ENCODE measurements at regions of chr22 and their contacts with region 1.

Region 1: GRCh38 chr22:49767355-49768062 is 60.2 kb downstream of the BRD1 start:
- DNase-seq: peak; percentile 33
- ATAC-seq: peak; percentile 74
- H3K4me3 Mint-ChIP-seq: no peak overlapping the region
- H3K27ac Mint-ChIP-seq: no peak overlapping the region
- H3K4me1 Mint-ChIP-seq: peaks cover 5% of the 10 kb centered on the region
- H3K27me3 Mint-ChIP-seq: no peaks in the 10 kb centered on the region
- CTCF ChIP-seq: peak; percentile 92

Region 2: GRCh38 chr22:49735411-49735900 is 32.1 kb before region 1 on chr22:
- CTCF ChIA-PET with region 1: no interaction called
- POLR2A ChIA-PET with region 1: no interaction called
- intact Hi-C with region 1: no loop called
- DNase-seq: peak; percentile 12
- ATAC-seq: no peak
- H3K4me3 Mint-ChIP-seq: no peak overlapping the region
- H3K27ac Mint-ChIP-seq: no peak overlapping the region
- H3K4me1 Mint-ChIP-seq: peaks cover 14% of the 10 kb centered on the region
- H3K27me3 Mint-ChIP-seq: peaks cover 21% of the 10 kb centered on the region
- CTCF ChIP-seq: no peak

Region 3: GRCh38 chr22:49789289-49790141 is 22.0 kb after region 1 on chr22:
- CTCF ChIA-PET with region 1: interaction called, 11 read pairs
- POLR2A ChIA-PET with region 1: no interaction called
- intact Hi-C with region 1: no loop called
- DNase-seq: peak; percentile 73
- ATAC-seq: peak; percentile 94
- H3K4me3 Mint-ChIP-seq: peak overlapping the region; percentile 41
- H3K27ac Mint-ChIP-seq: peak overlapping the region; percentile 83
- H3K4me1 Mint-ChIP-seq: peaks cover 45% of the 10 kb centered on the region
- H3K27me3 Mint-ChIP-seq: no peaks in the 10 kb centered on the region
- CTCF ChIP-seq: no peak

Region 4: GRCh38 chr22:49799431-49800075 is 32.0 kb after region 1 on chr22:
- CTCF ChIA-PET with region 1: no interaction called
- POLR2A ChIA-PET with region 1: no interaction called
- intact Hi-C with region 1: no loop called
- DNase-seq: no peak
- ATAC-seq: no peak
- H3K4me3 Mint-ChIP-seq: no peak overlapping the region
- H3K27ac Mint-ChIP-seq: no peak overlapping the region
- H3K4me1 Mint-ChIP-seq: peaks cover 22% of the 10 kb centered on the region
- H3K27me3 Mint-ChIP-seq: no peaks in the 10 kb centered on the region
- CTCF ChIP-seq: no peak

Region 5: DNA sequence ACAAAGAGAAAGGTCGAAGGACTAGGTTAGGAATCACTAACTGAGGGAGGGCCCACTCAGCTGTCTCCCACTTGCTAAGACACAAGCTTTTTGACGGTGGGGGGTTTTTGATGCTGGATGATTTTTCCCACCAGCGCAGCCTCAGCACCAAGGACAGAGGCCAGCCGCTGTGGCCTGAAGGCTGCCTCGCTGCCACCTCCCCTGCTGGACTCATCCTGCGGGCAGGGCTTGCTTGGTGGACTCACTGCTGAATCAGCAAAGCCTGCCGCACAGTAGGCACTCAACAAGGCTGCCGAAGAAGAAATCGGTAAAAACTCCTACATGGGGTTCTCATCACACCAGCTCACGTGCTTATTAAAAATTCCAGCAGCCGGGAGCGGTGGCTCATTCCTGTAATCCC is 148.1 kb after region 1 on chr22:
- CTCF ChIA-PET with region 1: interaction called, 16 read pairs
- POLR2A ChIA-PET with region 1: interaction called, 4 read pairs
- intact Hi-C with region 1: loop called (anchors 10 kb)
- DNase-seq: no peak
- ATAC-seq: no peak
- H3K4me3 Mint-ChIP-seq: no peak overlapping the region
- H3K27ac Mint-ChIP-seq: no peak overlapping the region
- H3K4me1 Mint-ChIP-seq: peaks cover 16% of the 10 kb centered on the region
- H3K27me3 Mint-ChIP-seq: no peaks in the 10 kb centered on the region
- CTCF ChIP-seq: no peak

Region 6: GRCh38 chr22:49925525-49926128 is 158.1 kb after region 1 on chr22:
- CTCF ChIA-PET with region 1: interaction called, 13 read pairs
- POLR2A ChIA-PET with region 1: no interaction called
- intact Hi-C with region 1: loop called (anchors 10 kb)
- DNase-seq: peak; percentile 87
- ATAC-seq: peak; percentile 84
- H3K4me3 Mint-ChIP-seq: peak overlapping the region; percentile 77
- H3K27ac Mint-ChIP-seq: peak overlapping the region; percentile 94
- H3K4me1 Mint-ChIP-seq: peaks cover 33% of the 10 kb centered on the region
- H3K27me3 Mint-ChIP-seq: no peaks in the 10 kb centered on the region
- CTCF ChIP-seq: no peak

Region 7: DNA sequence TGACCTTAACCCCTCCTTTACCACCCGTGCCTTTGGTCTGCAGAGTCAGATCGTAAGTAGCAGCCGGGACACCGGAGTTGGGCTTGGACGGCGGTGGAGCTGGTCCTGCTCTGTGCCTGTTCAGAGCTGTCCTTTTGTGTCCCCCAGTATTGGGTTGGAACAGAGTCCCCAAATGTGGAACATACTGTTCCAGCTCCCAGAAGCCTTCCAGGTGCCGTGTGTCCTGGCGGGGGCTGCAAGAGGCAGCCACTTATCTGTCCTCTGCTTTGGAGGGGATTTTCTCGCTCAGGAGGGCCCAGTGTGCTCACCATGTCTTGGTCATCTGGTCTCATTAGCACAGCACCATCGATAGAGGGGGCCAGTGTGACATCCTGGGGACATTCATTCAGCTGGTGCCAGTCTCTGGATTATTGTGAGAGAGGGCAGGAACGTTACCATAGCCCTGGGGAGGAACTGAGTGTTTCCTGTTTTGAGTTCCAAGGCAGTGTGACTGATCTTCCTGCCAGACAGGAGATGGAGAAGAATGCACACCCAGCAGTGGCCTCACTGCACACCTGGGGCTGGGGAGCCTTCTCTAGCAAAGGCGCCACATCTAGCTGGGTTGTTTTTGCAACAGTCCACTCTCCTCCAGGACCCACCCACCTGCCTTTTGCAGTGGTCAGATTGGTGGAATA is 163.4 kb after region 1 on chr22:
- CTCF ChIA-PET with region 1: interaction called, 13 read pairs
- POLR2A ChIA-PET with region 1: no interaction called
- intact Hi-C with region 1: loop called (anchors 10 kb)
- DNase-seq: peak; percentile 76
- ATAC-seq: peak; percentile 32
- H3K4me3 Mint-ChIP-seq: no peak overlapping the region
- H3K27ac Mint-ChIP-seq: peak overlapping the region; percentile 27
- H3K4me1 Mint-ChIP-seq: peaks cover 37% of the 10 kb centered on the region
- H3K27me3 Mint-ChIP-seq: no peaks in the 10 kb centered on the region
- CTCF ChIP-seq: peak; percentile 51

Region 8: DNA sequence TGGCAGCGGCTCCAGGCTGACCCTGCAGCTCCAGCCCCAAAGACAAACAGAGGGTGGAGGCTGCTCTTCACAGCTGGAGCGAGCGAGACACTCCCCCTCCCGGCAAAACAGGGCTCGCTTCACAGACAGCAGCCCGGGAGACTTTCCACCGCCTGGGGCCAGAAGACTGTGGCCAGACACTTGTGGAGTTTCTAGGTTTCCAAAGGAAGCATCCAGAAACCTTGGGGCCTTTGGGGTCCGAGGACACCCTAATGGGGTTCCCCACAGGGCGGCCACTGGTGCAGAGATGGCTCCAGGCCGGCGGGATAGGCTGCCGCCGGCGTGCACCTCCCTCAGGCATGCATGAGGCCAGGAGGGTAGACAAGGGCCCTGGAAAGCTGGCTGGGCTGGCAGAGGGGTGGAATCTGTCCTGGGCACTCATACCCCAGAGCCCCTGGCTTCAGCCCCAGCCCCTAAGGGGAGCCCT is 245.2 kb after region 1 on chr22 and contains the start of gene IL17REL:
- CTCF ChIA-PET with region 1: no interaction called
- POLR2A ChIA-PET with region 1: no interaction called
- intact Hi-C with region 1: no loop called
- DNase-seq: no peak
- ATAC-seq: no peak
- H3K4me3 Mint-ChIP-seq: peak within 1 kb of the TSS; percentile 62
- H3K27ac Mint-ChIP-seq: peak within 1 kb of the TSS; percentile 72
- H3K4me1 Mint-ChIP-seq: peaks cover 31% of the 10 kb centered on the region
- H3K27me3 Mint-ChIP-seq: peaks cover 2% of the 10 kb centered on the region
- CTCF ChIP-seq: no peak
- total RNA-seq, gene IL17REL: 0.14 TPM in 1 of 2 experiments, not detected in the other

Measured in activated CD8-positive, alpha-beta T cell treated with anti-CD3 and anti-CD28 coated beads for 36 hours (primary cell).